ENCODE measurements at regions of chr12 and their contacts with region 1.

Region 1: GRCh38 chr12:62297321-62297720 is 37.1 kb downstream of the USP15 start:
- DNase-seq: peak; percentile 30 to 38 (median 38)
- H3K4me3 ChIP-seq: peak overlapping the region in 1 of 3 experiments; percentile 3
- H3K4me3 Mint-ChIP-seq: no peak overlapping the region
- H3K27ac ChIP-seq: peak overlapping the region; percentile 51 to 69
- H3K27ac Mint-ChIP-seq: peak overlapping the region; percentile 71 to 89 (median 79)
- H3K4me1 ChIP-seq: peaks cover 29 to 32% of the 10 kb centered on the region in 2 donors
- H3K4me1 Mint-ChIP-seq: peaks cover 59% of the 10 kb centered on the region
- H3K27me3 ChIP-seq: no peaks in the 10 kb centered on the region
- H3K27me3 Mint-ChIP-seq: no peaks in the 10 kb centered on the region
- CTCF ChIP-seq: no peak

Region 2: GRCh38 chr12:62006076-62006732 is 291.1 kb before region 1 on chr12:
- intact Hi-C with region 1: no loop called
- DNase-seq: peak; percentile 18 to 39 (median 35)
- H3K4me3 ChIP-seq: no peak overlapping the region
- H3K4me3 Mint-ChIP-seq: no peak overlapping the region
- H3K27ac ChIP-seq: no peak overlapping the region
- H3K27ac Mint-ChIP-seq: no peak overlapping the region
- H3K4me1 ChIP-seq: peaks cover 13 to 14% of the 10 kb centered on the region in 2 donors
- H3K4me1 Mint-ChIP-seq: peaks cover 2% of the 10 kb centered on the region
- H3K27me3 ChIP-seq: no peaks in the 10 kb centered on the region
- H3K27me3 Mint-ChIP-seq: no peaks in the 10 kb centered on the region
- CTCF ChIP-seq: peak; percentile 78

Region 3: GRCh38 chr12:62259993-62260732 is 37.2 kb before region 1 on chr12 and contains the start of gene USP15:
- intact Hi-C with region 1: loop called in 1 of 2 experiments (anchors 5 kb)
- DNase-seq: peak; percentile 92 to 96 (median 96)
- H3K4me3 ChIP-seq: peak within 1 kb of the TSS; percentile 86 to 99 (median 98)
- H3K4me3 Mint-ChIP-seq: peak within 1 kb of the TSS; percentile 99 to 100
- H3K27ac ChIP-seq: peak within 1 kb of the TSS; percentile 93 to 100
- H3K27ac Mint-ChIP-seq: peak within 1 kb of the TSS; percentile 99 to 100 (median 99)
- H3K4me1 ChIP-seq: peaks cover 63 to 79% of the 10 kb centered on the region in 2 donors
- H3K4me1 Mint-ChIP-seq: peaks cover 65% of the 10 kb centered on the region
- H3K27me3 ChIP-seq: no peaks in the 10 kb centered on the region
- H3K27me3 Mint-ChIP-seq: no peaks in the 10 kb centered on the region
- CTCF ChIP-seq: peak; percentile 70
- polyA plus RNA-seq, gene USP15: 146 to 449 (median 180) TPM

Measured in CD14-positive monocyte (primary cell).